ENCODE measurements at regions of chr19 and their contacts with region 1.

Region 1: GRCh38 chr19:13060964-13061927 is 41.4 kb downstream of the LYL1 start:
- DNase-seq: peak; percentile 70
- ATAC-seq: peak; percentile 76
- H3K4me3 ChIP-seq: peak overlapping the region; percentile 46 to 78 (median 54); a peak in 5 of 6 replicates
- H3K27ac ChIP-seq: peak overlapping the region; percentile 98
- H3K4me1 ChIP-seq: peaks cover 55% of the 10 kb centered on the region
- H3K27me3 ChIP-seq: no peaks in the 10 kb centered on the region
- CTCF ChIP-seq: peak; percentile 99
- EP300 ChIP-seq: no peak
- POLR2A ChIP-seq: peak in 1 of 2 experiments; percentile 56; a peak in 1 of 4 replicates
- RAD21 ChIP-seq: peak; percentile 99

Region 2: GRCh38 chr19:12974301-12975220 is 86.7 kb before region 1 on chr19:
- CTCF ChIA-PET with region 1: interaction called, 10 read pairs
- POLR2A ChIA-PET with region 1: interaction called, 17 read pairs
- in situ Hi-C with region 1: no loop called
- intact Hi-C with region 1: no loop called
- DNase-seq: peak; percentile 35
- ATAC-seq: no peak
- H3K4me3 ChIP-seq: peak overlapping the region in 1 of 3 experiments; percentile 38; a peak in 2 of 6 replicates
- H3K27ac ChIP-seq: no peak overlapping the region
- H3K4me1 ChIP-seq: peaks cover 29% of the 10 kb centered on the region
- H3K27me3 ChIP-seq: no peaks in the 10 kb centered on the region
- CTCF ChIP-seq: no peak
- EP300 ChIP-seq: no peak
- POLR2A ChIP-seq: no peak
- RAD21 ChIP-seq: no peak

Region 3: DNA sequence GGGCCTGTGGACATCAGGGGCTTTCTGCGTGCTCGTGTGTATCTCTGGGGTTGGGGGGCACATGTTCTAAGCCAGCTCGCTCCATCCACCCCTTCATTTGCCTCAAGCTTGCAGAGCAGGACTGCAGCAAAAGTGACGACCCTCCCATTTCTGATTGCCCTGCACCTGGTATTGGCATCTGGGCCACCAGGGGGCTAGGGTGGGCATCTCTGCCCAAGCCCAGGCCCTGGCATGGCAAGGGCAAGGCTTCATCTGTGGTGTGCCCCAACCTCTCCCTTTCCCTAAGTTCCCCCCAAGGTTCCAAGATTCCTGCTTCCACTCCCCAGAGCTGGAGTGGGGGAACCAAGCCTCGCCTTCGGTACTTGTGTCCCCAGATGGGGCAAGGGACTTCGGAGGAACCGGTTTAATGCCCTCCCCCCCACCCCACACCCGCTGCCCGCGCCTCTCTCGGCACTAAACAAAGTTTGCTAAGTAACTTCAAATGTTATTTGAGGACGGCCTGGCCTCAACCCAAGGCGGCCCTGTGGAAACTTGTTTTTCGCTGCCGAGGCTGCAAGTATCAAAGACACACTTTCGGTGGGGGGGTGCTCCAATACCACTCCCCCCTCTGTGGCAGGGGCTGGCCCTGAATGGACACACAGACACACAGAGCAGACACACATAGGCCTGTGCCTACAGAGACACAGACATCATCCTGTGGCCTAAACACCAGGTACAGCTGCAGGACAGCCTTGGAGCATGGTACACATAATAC is 53.8 kb before region 1 on chr19:
- CTCF ChIA-PET with region 1: no interaction called
- POLR2A ChIA-PET with region 1: interaction called, 16 read pairs
- in situ Hi-C with region 1: no loop called
- intact Hi-C with region 1: no loop called
- DNase-seq: no peak
- ATAC-seq: no peak
- H3K4me3 ChIP-seq: no peak overlapping the region
- H3K27ac ChIP-seq: no peak overlapping the region
- H3K4me1 ChIP-seq: peaks cover 14% of the 10 kb centered on the region
- H3K27me3 ChIP-seq: no peaks in the 10 kb centered on the region; a peak in 1 of 5 replicates
- CTCF ChIP-seq: no peak
- EP300 ChIP-seq: no peak
- POLR2A ChIP-seq: no peak
- RAD21 ChIP-seq: no peak

Region 4: GRCh38 chr19:13022859-13023636 is 38.2 kb before region 1 on chr19:
- CTCF ChIA-PET with region 1: no interaction called
- POLR2A ChIA-PET with region 1: interaction called, 31 read pairs
- in situ Hi-C with region 1: loop called (anchors 5 kb)
- intact Hi-C with region 1: loop called (anchors 5 kb)
- DNase-seq: peak; percentile 79
- ATAC-seq: peak; percentile 82
- H3K4me3 ChIP-seq: peak overlapping the region; percentile 52 to 71 (median 62)
- H3K27ac ChIP-seq: peak overlapping the region; percentile 73
- H3K4me1 ChIP-seq: peaks cover 83% of the 10 kb centered on the region
- H3K27me3 ChIP-seq: no peaks in the 10 kb centered on the region
- CTCF ChIP-seq: no peak
- EP300 ChIP-seq: no peak
- POLR2A ChIP-seq: no peak
- RAD21 ChIP-seq: no peak

Region 5: GRCh38 chr19:13044231-13044836 is 16.9 kb before region 1 on chr19:
- CTCF ChIA-PET with region 1: no interaction called
- POLR2A ChIA-PET with region 1: interaction called, 19 read pairs
- in situ Hi-C with region 1: no loop called
- intact Hi-C with region 1: no loop called
- DNase-seq: no peak
- ATAC-seq: no peak
- H3K4me3 ChIP-seq: no peak overlapping the region
- H3K27ac ChIP-seq: no peak overlapping the region
- H3K4me1 ChIP-seq: peaks cover 29% of the 10 kb centered on the region
- H3K27me3 ChIP-seq: no peaks in the 10 kb centered on the region
- CTCF ChIP-seq: no peak
- EP300 ChIP-seq: no peak
- POLR2A ChIP-seq: no peak
- RAD21 ChIP-seq: no peak

Region 6: DNA sequence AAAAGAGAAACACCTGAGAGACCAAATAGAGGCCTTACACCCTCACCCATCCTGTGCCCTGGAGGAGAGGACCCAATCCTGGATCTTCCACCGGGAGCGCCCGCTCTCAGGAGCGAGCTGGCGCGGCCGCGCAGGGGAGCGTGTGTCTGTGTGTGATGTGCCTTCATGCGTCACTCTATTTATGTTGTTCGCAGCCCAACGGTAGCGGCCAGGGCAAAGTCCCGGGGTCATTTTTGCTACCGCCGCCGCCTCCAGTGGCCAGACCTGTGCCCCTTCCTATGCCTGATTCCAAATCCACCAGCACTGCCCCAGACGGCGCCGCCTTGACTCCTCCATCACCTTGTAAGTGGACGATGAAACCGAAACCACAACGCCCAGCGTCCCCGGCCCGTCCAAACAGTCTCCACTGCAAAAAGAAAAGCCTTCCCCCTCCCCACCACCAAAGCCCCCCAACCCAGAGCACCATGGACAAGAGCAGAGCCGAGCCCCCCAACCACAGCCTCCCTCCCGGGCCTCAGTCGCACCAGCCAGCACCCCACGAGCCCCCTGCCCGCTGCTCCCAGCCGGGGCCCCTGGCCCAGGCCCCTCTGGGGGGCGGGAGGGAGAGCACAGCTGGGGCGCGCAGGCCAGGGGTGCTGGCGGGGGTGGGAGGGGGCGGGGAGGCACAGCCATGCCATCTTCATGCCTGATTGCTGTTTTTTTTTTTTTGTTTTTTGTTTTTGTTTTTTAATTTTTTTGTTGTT is 26.7 kb after region 1 on chr19:
- CTCF ChIA-PET with region 1: no interaction called
- POLR2A ChIA-PET with region 1: no interaction called
- in situ Hi-C with region 1: no loop called
- intact Hi-C with region 1: no loop called
- DNase-seq: no peak
- ATAC-seq: no peak
- H3K4me3 ChIP-seq: no peak overlapping the region
- H3K27ac ChIP-seq: no peak overlapping the region
- H3K4me1 ChIP-seq: peaks cover 19% of the 10 kb centered on the region
- H3K27me3 ChIP-seq: no peaks in the 10 kb centered on the region
- CTCF ChIP-seq: no peak
- EP300 ChIP-seq: no peak
- POLR2A ChIP-seq: no peak
- RAD21 ChIP-seq: no peak

Region 7: GRCh38 chr19:13132471-13133180 is 71.4 kb after region 1 on chr19:
- CTCF ChIA-PET with region 1: no interaction called
- POLR2A ChIA-PET with region 1: no interaction called
- in situ Hi-C with region 1: no loop called
- intact Hi-C with region 1: no loop called
- DNase-seq: no peak
- ATAC-seq: no peak
- H3K4me3 ChIP-seq: no peak overlapping the region
- H3K27ac ChIP-seq: no peak overlapping the region
- H3K4me1 ChIP-seq: peaks cover 34% of the 10 kb centered on the region
- H3K27me3 ChIP-seq: no peaks in the 10 kb centered on the region
- CTCF ChIP-seq: no peak
- EP300 ChIP-seq: no peak
- POLR2A ChIP-seq: no peak
- RAD21 ChIP-seq: no peak

Region 8: DNA sequence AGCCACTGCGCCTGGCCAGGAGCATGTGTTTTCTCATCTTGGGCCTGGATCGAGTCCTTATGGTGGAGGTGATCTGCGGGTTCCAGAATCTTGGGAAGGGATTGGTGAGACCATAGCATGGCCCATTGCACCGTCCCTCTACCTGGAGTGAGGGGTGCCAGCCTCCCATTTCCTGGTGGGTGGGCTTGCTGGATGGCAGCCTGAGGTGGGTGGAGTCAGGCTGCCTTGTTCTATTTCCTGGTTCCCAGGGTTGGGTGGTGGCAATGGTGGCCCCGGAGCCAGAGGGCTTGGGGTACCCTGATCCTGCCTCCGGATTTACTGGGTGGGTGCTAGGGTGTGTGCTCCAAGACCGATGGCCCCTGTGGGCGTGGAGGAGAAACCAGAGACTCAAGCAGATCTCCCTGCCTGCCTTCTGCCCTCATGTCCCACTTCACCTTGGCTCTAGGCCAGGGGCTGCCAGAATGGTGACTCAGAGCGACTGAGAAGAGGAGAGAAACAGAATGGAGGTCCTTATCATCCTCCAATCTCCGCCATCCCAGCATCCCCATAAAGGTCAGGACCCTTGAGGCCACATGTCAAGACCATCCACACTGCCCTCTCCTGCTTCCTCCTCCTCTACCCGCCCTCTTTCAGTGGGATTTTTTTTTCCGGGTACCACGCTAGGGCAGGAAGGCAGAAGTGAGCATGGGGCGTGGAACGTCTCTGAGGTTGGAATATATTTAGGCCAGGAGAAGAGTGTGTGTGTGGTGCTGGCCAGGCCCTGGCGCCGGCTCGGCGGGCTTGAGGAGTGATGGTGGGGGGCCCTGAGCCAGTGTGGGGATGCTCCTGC is 111.0 kb after region 1 on chr19:
- CTCF ChIA-PET with region 1: no interaction called
- POLR2A ChIA-PET with region 1: no interaction called
- in situ Hi-C with region 1: no loop called
- intact Hi-C with region 1: no loop called
- DNase-seq: no peak
- ATAC-seq: no peak
- H3K4me3 ChIP-seq: no peak overlapping the region
- H3K27ac ChIP-seq: no peak overlapping the region
- H3K4me1 ChIP-seq: peaks cover 32% of the 10 kb centered on the region
- H3K27me3 ChIP-seq: no peaks in the 10 kb centered on the region
- CTCF ChIP-seq: no peak
- EP300 ChIP-seq: no peak
- POLR2A ChIP-seq: no peak
- RAD21 ChIP-seq: no peak

Region 9: GRCh38 chr19:13255041-13255718 is 193.9 kb after region 1 on chr19:
- CTCF ChIA-PET with region 1: no interaction called
- POLR2A ChIA-PET with region 1: no interaction called
- in situ Hi-C with region 1: no loop called
- intact Hi-C with region 1: no loop called
- DNase-seq: no peak
- ATAC-seq: peak; percentile 24; the same call in 2 of the 3 replicates
- H3K4me3 ChIP-seq: no peak overlapping the region
- H3K27ac ChIP-seq: no peak overlapping the region
- H3K4me1 ChIP-seq: no peaks in the 10 kb centered on the region
- H3K27me3 ChIP-seq: peaks cover 1 to 21% of the 10 kb centered on the region in 2 experiments; a peak in 2 of 5 replicates
- CTCF ChIP-seq: no peak
- EP300 ChIP-seq: no peak
- POLR2A ChIP-seq: no peak
- RAD21 ChIP-seq: no peak

Measured in HepG2 (cell line).